MCF 10A (cell line): ENCODE measurements at regions of chr11 and their contacts with region 1.

Region 1: DNA sequence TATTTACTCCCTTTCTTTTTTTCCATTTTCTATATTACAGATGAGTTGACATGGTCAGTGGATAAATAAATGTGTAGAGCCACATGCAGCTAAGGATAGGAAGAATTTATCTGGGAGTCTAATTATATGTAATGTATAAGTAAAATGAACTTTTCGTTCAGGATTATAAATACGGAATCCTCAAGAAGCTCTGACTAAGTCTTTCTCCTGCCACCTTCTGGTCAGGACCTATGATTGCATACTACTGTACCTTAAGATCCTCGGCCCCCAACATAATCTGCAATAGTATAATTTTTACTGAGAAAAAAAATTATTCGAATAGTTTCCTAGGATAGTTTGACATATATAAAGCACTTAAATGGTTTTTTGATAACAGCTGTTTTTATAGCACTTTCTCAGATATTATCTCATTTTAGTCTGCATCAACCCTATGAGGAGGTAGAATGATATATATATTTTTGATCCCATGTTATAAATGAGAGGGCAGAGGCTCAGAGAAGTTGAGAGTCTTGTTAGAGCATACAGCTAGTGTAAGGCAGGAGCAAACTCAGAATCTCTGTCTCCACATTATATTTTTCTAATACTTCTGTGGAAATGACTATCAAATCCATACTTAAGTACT is 36.1 kb downstream of the CCDC90B start:
- DNase-seq: peak; percentile 53
- H3K4me3 Mint-ChIP-seq: no peak overlapping the region
- H3K27ac Mint-ChIP-seq: no peak overlapping the region
- H3K4me1 Mint-ChIP-seq: no peaks in the 10 kb centered on the region
- H3K27me3 Mint-ChIP-seq: no peaks in the 10 kb centered on the region
- CTCF ChIP-seq: peak; percentile 53

Region 2: GRCh38 chr11:82854242-82854641 is 395.8 kb before region 1 on chr11:
- CTCF ChIA-PET with region 1: no interaction called
- POLR2A ChIA-PET with region 1: no interaction called
- intact Hi-C with region 1: no loop called
- DNase-seq: no peak
- H3K4me3 Mint-ChIP-seq: no peak overlapping the region
- H3K27ac Mint-ChIP-seq: no peak overlapping the region
- H3K4me1 Mint-ChIP-seq: peaks cover 24% of the 10 kb centered on the region
- H3K27me3 Mint-ChIP-seq: no peaks in the 10 kb centered on the region
- CTCF ChIP-seq: no peak

Region 3: DNA sequence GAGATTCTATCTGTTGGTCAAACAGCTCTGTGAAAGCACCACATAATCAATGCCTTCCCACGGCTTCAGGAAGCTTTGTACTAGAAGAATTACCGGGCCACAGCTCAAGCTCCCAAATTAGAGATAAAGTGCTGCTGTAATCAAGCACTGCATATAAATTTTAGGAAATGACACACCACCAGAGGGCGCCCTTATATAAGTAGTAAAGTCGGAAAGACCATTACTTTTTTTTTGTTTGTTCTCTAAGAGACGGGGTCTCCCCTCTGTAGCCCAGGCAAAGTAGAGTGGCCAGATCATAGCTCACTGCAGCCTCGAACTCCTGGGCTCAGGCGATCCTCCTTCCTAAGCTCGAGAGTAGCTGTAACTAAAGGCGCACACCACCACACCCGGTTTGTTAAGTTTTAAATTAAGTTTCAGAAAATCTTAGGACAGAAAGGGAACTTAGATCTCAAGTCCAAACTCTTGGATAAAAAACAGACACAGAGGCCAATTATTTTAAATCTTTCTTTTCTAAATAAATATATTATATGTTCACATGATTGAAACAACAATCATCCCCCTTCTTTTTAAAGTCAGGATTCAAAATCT is 382.5 kb before region 1 on chr11:
- CTCF ChIA-PET with region 1: interaction called, 34 read pairs
- POLR2A ChIA-PET with region 1: no interaction called
- intact Hi-C with region 1: loop called (anchors 1 kb)
- DNase-seq: peak; percentile 71
- H3K4me3 Mint-ChIP-seq: no peak overlapping the region
- H3K27ac Mint-ChIP-seq: no peak overlapping the region
- H3K4me1 Mint-ChIP-seq: peaks cover 23% of the 10 kb centered on the region
- H3K27me3 Mint-ChIP-seq: no peaks in the 10 kb centered on the region
- CTCF ChIP-seq: peak; percentile 75

Region 4: DNA sequence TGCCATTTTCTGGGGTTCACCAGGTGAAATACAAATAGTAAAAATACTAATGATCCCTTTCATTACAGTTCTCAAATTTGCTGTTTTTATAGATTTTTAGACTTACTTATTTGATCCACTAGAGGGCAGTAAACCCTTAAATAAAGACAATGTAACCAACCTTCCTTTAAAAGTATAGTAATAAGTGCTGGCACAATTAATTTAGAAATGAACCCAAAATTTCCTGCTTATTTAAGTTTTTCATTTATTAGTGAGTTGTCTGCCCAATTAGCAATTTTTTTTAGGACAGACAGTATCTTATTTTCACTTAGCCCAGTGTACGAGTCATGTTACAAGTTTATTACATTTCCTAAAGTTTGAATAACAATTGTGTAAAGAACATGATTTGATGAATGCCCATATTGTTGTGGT is 343.8 kb before region 1 on chr11:
- CTCF ChIA-PET with region 1: interaction called, 57 read pairs
- POLR2A ChIA-PET with region 1: interaction called, 8 read pairs
- intact Hi-C with region 1: loop called (anchors 1 kb)
- DNase-seq: peak; percentile 40
- H3K4me3 Mint-ChIP-seq: peak overlapping the region; percentile 37
- H3K27ac Mint-ChIP-seq: peak overlapping the region; percentile 40
- H3K4me1 Mint-ChIP-seq: peaks cover 34% of the 10 kb centered on the region
- H3K27me3 Mint-ChIP-seq: no peaks in the 10 kb centered on the region
- CTCF ChIP-seq: peak; percentile 46

Region 5: DNA sequence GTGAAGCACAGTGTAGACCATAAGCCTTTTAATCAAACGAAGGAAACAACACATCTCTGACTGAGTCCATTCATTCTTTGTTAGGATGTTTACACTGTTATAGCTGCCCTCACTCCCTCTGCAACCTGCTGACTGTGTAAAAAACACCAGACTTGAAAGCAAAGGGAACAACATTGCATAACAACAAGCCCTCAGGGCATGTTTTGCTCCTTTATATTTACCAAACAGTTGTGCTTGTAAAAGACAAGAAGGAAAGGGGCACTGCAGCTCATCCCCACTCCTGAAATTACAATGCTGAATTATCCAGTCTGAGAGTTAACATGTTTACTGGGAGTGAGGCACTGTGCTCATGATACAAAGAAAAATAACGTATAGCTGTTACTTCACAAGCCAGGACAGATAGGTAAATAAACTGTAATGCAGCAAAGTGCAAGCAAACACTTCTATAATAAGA is 224.8 kb before region 1 on chr11:
- CTCF ChIA-PET with region 1: no interaction called
- POLR2A ChIA-PET with region 1: no interaction called
- intact Hi-C with region 1: no loop called
- DNase-seq: peak; percentile 71
- H3K4me3 Mint-ChIP-seq: no peak overlapping the region
- H3K27ac Mint-ChIP-seq: peak overlapping the region; percentile 19
- H3K4me1 Mint-ChIP-seq: peaks cover 16% of the 10 kb centered on the region
- H3K27me3 Mint-ChIP-seq: no peaks in the 10 kb centered on the region
- CTCF ChIP-seq: no peak

Region 6: DNA sequence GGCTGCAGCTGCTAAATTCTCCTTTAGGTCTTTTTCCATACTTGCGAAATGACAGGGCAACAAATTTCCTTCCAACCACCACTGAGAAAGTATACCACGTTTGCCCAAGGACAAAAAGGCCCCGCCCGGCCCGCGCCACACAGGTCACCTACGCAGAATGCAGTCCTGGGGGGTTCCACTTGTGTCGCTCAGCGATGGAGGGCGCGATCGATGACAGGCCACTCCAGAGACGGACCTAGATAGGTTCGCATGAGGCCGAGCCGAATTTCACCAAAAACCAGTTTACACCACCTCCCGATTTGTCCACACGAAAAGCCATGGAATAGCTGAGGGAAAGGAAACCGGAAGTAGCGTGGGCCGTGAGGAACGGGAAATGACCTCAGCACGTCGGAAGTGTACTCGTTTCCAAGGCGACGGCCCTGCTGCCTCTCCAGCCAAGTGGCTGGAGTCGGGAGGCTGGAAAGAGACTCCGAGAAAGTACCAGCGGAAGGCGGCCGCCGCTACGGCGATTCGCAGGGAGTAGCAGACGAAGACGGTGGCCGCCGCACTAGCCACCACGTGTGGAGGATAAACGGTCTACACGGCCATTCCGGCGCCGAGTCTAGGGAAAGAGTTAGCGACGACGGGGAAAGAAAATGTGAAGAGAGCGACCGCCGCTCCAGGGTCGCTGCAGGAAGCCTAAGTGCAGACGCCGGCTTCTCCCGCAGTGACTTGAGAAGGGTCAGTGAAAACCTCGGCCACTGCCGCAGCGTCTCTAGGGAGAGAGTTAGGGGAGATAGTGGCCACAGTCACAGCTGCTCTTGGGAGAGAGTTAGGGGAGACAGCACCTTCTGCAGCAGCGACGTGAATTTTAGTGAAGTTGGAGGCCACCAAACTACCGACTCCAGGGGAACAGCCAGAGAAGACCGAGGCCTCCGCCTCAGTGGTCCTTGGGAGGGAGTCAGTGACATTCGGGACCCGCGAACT is 56.5 kb before region 1 on chr11 and contains the start of gene ANKRD42:
- CTCF ChIA-PET with region 1: interaction called, 6 read pairs
- POLR2A ChIA-PET with region 1: interaction called, 11 read pairs
- intact Hi-C with region 1: loop called (anchors 1 kb)
- DNase-seq: peak; percentile 97
- H3K4me3 Mint-ChIP-seq: peak within 1 kb of the TSS; percentile 94
- H3K27ac Mint-ChIP-seq: peak within 1 kb of the TSS; percentile 92
- H3K4me1 Mint-ChIP-seq: peaks cover 34% of the 10 kb centered on the region
- H3K27me3 Mint-ChIP-seq: no peaks in the 10 kb centered on the region
- CTCF ChIP-seq: no peak
- total RNA-seq, gene ANKRD42: 8.6 and 13.5 TPM in 2 replicates

Region 7: GRCh38 chr11:83265331-83265730 is 15.2 kb after region 1 on chr11:
- CTCF ChIA-PET with region 1: interaction called, 32 read pairs
- POLR2A ChIA-PET with region 1: interaction called, 3 read pairs
- intact Hi-C with region 1: no loop called
- DNase-seq: no peak
- H3K4me3 Mint-ChIP-seq: no peak overlapping the region
- H3K27ac Mint-ChIP-seq: no peak overlapping the region
- H3K4me1 Mint-ChIP-seq: peaks cover 5% of the 10 kb centered on the region
- H3K27me3 Mint-ChIP-seq: no peaks in the 10 kb centered on the region
- CTCF ChIP-seq: no peak

Region 8: DNA sequence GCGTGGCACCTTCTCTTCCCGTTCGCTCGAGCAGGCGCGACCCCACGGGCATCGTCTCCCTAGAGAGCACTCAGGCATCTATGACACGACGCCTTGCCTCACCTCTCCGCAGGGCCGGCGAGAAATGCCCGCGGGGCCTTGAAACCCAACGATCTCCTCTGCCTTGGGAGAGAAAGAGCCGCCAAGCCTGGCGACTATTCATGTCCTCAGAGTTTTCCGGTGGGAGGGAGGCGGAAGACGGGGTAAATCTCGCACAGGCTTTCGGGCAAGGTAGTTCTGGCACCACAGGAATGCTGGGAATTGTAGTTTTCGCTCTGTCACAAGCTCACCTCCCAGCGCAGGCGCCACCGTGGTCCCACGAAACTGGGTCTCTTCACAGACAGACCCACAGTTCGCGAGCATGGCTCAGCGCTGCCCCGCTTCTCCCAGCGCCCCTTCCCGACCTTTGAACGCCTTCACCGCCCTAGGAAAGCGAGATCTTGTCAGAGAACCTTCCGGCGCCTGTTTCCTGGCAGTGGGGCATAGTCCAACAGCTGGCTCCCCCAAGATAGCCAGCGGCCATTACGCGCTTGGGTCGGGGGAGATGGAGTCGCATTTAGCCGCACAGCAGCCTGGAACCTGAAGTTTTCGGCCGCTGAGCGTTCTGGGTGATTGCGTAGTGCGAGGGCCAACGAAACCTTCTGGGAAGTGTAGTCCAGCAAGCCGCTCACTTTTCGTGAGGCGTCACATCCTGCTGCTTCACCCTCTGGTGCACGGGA is 35.9 kb after region 1 on chr11 and contains the start of gene CCDC90B:
- CTCF ChIA-PET with region 1: interaction called, 11 read pairs
- POLR2A ChIA-PET with region 1: no interaction called
- intact Hi-C with region 1: no loop called
- DNase-seq: peak; percentile 97
- H3K4me3 Mint-ChIP-seq: peak within 1 kb of the TSS; percentile 90
- H3K27ac Mint-ChIP-seq: peak within 1 kb of the TSS; percentile 99
- H3K4me1 Mint-ChIP-seq: peaks cover 10% of the 10 kb centered on the region
- H3K27me3 Mint-ChIP-seq: no peaks in the 10 kb centered on the region
- CTCF ChIP-seq: peak; percentile 6
- total RNA-seq, gene CCDC90B: 69.1 and 72.9 TPM in 2 replicates